ENCODE measurements at regions of chr7 and their contacts with region 1.

Region 1: GRCh38 chr7:149261829-149262617 is at the start of gene ZNF783:
- DNase-seq: peak; percentile 88
- ATAC-seq: peak; percentile 91
- H3K4me3 Mint-ChIP-seq: peak within 1 kb of the TSS; percentile 89
- H3K27ac Mint-ChIP-seq: peak within 1 kb of the TSS; percentile 90
- H3K4me1 Mint-ChIP-seq: peaks cover 23% of the 10 kb centered on the region
- H3K27me3 Mint-ChIP-seq: no peaks in the 10 kb centered on the region
- CTCF ChIP-seq: no peak
- total RNA-seq, gene ZNF783: 28.5 and 34.1 TPM in 2 replicates

Region 2: DNA sequence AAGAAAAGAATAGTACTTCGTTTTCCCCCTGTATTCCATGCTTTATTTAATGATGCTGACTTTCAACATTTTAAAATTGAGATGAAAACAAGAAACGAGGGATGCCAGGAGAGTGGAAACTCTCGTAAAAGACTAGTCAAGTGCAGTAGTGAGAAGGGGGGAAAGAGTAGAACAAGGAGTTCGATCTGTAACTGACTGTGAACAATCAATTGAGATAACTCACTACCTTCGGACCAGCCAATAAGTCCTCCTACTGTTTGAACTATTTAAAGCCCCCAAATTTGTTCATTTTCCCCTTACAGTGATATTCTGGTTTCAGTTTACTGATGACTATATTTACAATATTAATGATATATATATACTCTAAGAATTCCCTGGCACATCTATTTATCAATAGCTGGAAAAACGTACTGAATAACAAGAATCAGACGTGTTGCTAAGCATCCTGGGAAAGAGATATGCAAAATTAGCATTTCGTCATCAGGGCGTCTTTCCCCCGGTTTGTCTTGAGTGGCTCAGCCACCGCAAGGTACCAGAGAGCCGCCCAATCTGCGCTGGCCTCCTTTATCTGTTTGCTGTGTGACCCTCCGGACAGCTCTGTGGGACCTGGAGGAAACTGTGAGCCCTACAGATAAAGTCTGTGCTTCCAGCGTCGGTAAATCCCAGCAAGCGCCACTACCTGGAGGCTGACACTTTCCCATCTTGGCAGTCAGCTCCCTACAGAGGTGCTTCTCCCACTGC is 274.8 kb before region 1 on chr7:
- CTCF ChIA-PET with region 1: no interaction called
- POLR2A ChIA-PET with region 1: interaction called, 10 read pairs
- intact Hi-C with region 1: no loop called
- DNase-seq: peak; percentile 60
- ATAC-seq: peak; percentile 85
- H3K4me3 Mint-ChIP-seq: peak overlapping the region; percentile 96
- H3K27ac Mint-ChIP-seq: peak overlapping the region; percentile 93
- H3K4me1 Mint-ChIP-seq: peaks cover 50% of the 10 kb centered on the region
- H3K27me3 Mint-ChIP-seq: peaks cover 2% of the 10 kb centered on the region
- CTCF ChIP-seq: no peak

Region 3: GRCh38 chr7:149195180-149196150 is 66.6 kb before region 1 on chr7 and contains the start of gene ZNF282:
- CTCF ChIA-PET with region 1: no interaction called
- POLR2A ChIA-PET with region 1: interaction called, 8 read pairs
- intact Hi-C with region 1: loop called (anchors 2 kb)
- DNase-seq: peak; percentile 68
- ATAC-seq: peak; percentile 88
- H3K4me3 Mint-ChIP-seq: peak within 1 kb of the TSS; percentile 89
- H3K27ac Mint-ChIP-seq: peak within 1 kb of the TSS; percentile 66
- H3K4me1 Mint-ChIP-seq: peaks cover 31% of the 10 kb centered on the region
- H3K27me3 Mint-ChIP-seq: no peaks in the 10 kb centered on the region
- CTCF ChIP-seq: no peak
- total RNA-seq, gene ZNF282: 21.6 and 21.7 TPM in 2 replicates

Region 4: DNA sequence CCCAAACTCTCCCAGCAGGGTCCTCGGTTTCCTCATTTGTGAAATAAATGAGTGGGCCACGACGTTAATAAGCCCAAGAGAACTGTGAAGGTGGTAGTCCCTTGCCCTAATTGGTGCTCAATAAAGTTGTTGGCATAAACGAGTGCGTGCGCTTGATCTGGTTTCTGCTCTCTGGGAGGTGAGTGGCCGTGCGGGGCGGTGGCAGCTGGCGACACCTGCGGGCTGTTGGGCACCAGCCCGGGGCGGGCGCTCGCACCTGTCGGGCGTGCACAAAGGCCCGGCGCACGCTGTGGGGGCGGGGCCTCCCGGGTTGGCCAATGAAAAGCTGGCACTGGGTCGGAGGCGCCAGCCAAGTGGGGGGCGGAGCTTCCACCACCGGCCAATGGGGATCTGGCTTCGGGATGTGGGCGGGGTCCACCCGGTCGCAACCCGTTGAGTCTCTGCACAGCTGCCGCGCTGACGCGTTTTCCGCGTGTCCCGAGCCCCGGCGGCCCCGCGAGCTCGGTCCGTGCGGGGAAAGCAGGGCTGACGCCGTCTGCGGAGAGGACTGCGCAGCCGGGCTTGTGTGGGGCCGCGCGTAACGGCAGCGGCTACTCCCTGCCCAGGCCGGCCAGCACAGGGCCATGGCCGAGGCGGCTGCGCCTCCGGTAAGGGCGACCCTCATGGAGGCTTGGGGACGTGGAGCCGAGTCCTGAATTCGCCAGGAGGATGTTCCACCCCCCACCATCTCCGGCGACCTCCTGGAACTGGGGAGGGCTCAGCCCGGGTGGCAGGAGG is 23.0 kb after region 1 on chr7:
- CTCF ChIA-PET with region 1: interaction called, 19 read pairs
- POLR2A ChIA-PET with region 1: interaction called, 15 read pairs
- intact Hi-C with region 1: loop called (anchors 1 kb)
- DNase-seq: peak; percentile 95
- ATAC-seq: peak; percentile 99
- H3K4me3 Mint-ChIP-seq: peak overlapping the region; percentile 89
- H3K27ac Mint-ChIP-seq: no peak overlapping the region
- H3K4me1 Mint-ChIP-seq: peaks cover 27% of the 10 kb centered on the region
- H3K27me3 Mint-ChIP-seq: no peaks in the 10 kb centered on the region
- CTCF ChIP-seq: no peak

Region 5: GRCh38 chr7:149460493-149461277 is 198.7 kb after region 1 on chr7 and contains the start of gene ZNF777:
- CTCF ChIA-PET with region 1: interaction called, 3 read pairs
- POLR2A ChIA-PET with region 1: no interaction called
- intact Hi-C with region 1: loop called (anchors 1 kb)
- DNase-seq: peak; percentile 69
- ATAC-seq: peak; percentile 97
- H3K4me3 Mint-ChIP-seq: peak within 1 kb of the TSS; percentile 87
- H3K27ac Mint-ChIP-seq: peak within 1 kb of the TSS; percentile 65
- H3K4me1 Mint-ChIP-seq: peaks cover 24% of the 10 kb centered on the region
- H3K27me3 Mint-ChIP-seq: peaks cover 9% of the 10 kb centered on the region
- CTCF ChIP-seq: no peak
- total RNA-seq, gene ZNF777: 14.0 and 16.2 TPM in 2 replicates

Region 6: DNA sequence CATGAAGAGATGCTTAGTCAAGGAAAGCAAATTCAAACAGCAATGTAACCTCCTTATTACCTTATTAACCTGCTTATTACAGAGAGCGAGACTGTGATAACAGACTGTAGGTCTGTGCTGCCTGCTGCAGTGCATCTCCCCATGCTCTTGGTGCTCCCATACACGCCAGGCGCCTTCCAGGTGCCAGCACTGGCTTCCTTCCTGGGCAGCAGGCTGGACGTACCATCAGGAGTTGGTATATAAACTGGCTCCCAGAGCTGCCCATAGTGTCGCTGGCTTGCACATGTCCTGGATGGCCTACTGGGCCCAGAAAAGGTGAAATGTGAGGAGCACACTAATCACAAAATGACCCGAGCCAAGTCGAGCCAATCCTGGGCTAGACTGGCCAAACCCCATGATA is 625.3 kb after region 1 on chr7:
- CTCF ChIA-PET with region 1: no interaction called
- POLR2A ChIA-PET with region 1: no interaction called
- intact Hi-C with region 1: no loop called
- DNase-seq: no peak
- ATAC-seq: no peak
- H3K4me3 Mint-ChIP-seq: no peak overlapping the region
- H3K27ac Mint-ChIP-seq: no peak overlapping the region
- H3K4me1 Mint-ChIP-seq: peaks cover 21% of the 10 kb centered on the region
- H3K27me3 Mint-ChIP-seq: no peaks in the 10 kb centered on the region
- CTCF ChIP-seq: no peak